ENCODE measurements at regions of chr1 and their contacts with region 1.

Region 1: DNA sequence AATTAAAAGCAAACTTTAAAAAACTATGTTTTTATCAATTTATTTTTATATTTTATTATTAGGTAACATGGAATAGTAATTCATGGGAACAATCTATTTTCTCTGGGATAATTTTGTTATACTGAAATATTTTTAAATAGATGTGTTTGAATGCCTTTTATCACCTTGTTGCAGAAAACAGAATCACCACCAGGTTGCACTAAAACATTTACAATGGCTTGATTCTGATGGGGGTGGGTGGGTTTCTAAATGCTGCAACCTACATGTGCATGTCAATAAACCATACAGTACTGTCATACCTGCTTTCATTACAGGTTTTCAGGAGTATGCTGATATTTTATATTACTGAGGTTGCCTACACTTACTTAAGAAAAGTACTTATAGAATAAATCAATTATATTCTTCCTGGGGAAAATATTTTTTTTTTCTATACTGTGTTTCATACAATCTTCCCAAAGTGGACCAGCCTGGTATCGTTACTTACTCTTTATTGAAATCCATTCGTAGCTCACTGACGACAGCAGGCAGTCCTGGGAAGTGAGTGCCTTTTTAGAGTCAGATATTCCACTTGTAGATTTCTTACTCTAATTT is 132.8 kb downstream of the PTPRC start:
- DNase-seq: peak; percentile 62
- H3K4me3 ChIP-seq: no peak overlapping the region
- H3K27ac ChIP-seq: no peak overlapping the region
- H3K4me1 ChIP-seq: peaks cover 8% of the 10 kb centered on the region
- CTCF ChIP-seq: peak; percentile 89

Region 2: DNA sequence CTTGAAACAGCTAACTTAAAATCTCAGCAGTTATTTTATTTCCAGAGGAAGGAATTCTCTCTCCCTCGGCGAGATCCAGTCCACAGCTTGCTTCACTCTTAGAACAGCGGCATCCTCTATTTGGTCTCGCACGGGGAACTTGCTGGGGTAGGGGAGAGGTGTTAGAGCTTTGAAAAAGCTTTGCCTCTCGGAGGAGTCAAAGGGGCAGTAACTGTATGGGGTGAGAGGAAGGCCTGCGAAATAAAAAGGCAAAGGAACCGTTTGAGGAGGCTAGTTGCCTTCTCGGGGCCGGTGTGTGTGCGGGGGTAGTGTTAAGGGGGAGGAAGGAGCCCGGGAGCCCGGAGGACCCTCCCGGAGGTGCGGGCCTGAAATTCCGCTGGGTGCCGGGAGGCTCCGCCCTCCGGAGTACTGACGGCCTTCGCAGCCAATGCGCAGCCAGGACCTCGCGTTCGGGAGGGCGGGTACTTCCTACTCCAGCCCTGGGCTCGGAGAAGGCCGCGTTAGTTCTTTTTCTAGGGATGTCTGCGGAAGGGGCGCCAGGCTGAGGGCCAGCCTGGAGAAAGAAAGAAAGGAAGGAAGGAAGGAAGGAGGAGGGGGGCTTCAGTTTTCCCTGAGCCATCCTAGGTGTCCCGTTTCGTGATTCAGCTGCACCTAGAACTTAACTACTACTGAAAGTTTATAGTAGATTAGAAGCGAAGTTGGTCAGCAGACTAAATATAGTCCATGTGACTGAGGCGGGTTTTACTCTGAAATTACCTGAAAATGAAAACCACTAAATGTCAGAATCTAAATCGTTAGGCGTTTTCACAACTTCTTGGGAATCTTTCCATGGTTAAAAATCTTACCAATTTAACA is 612.7 kb before region 1 on chr1:
- CTCF ChIA-PET with region 1: no interaction called
- POLR2A ChIA-PET with region 1: no interaction called
- intact Hi-C with region 1: no loop called
- DNase-seq: peak; percentile 90
- H3K4me3 ChIP-seq: peak overlapping the region; percentile 97
- H3K27ac ChIP-seq: peak overlapping the region; percentile 70
- H3K4me1 ChIP-seq: peaks cover 36% of the 10 kb centered on the region
- CTCF ChIP-seq: no peak

Region 3: GRCh38 chr1:198959032-198959431 is 187.4 kb after region 1 on chr1:
- CTCF ChIA-PET with region 1: no interaction called
- POLR2A ChIA-PET with region 1: no interaction called
- intact Hi-C with region 1: no loop called
- DNase-seq: no peak
- H3K4me3 ChIP-seq: no peak overlapping the region
- H3K27ac ChIP-seq: no peak overlapping the region
- H3K4me1 ChIP-seq: no peaks in the 10 kb centered on the region
- CTCF ChIP-seq: no peak

Region 4: GRCh38 chr1:199002661-199003060 is 231.0 kb after region 1 on chr1:
- CTCF ChIA-PET with region 1: no interaction called
- POLR2A ChIA-PET with region 1: no interaction called
- intact Hi-C with region 1: no loop called
- DNase-seq: no peak
- H3K4me3 ChIP-seq: no peak overlapping the region
- H3K27ac ChIP-seq: no peak overlapping the region
- H3K4me1 ChIP-seq: no peaks in the 10 kb centered on the region
- CTCF ChIP-seq: no peak

Region 5: DNA sequence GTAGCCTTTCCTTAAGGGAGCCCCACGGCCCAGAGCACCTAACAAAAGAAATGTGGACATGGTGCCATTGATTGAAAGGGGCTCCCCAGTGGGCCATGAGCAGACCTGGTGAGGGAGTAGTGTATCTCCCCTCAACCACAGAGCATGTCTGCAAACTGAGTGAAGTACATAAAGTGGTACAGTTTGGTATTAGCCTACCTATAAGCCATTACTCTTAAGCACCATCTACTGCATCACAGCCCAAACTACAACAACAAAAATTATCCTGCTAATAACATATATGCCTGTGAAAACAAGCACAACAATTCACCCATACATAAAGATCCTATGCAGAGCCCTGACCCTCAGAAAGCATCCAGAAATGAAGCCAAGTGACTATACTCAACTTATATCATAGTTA is 275.0 kb after region 1 on chr1:
- CTCF ChIA-PET with region 1: no interaction called
- POLR2A ChIA-PET with region 1: no interaction called
- intact Hi-C with region 1: loop called (anchors 5 kb)
- DNase-seq: peak; percentile 54
- H3K4me3 ChIP-seq: no peak overlapping the region
- H3K27ac ChIP-seq: no peak overlapping the region
- H3K4me1 ChIP-seq: peaks cover 21% of the 10 kb centered on the region
- CTCF ChIP-seq: peak; percentile 74

Region 6: GRCh38 chr1:199113265-199113869 is 341.7 kb after region 1 on chr1:
- CTCF ChIA-PET with region 1: interaction called, 5 read pairs
- POLR2A ChIA-PET with region 1: interaction called, 4 read pairs
- intact Hi-C with region 1: loop called (anchors 1 kb)
- DNase-seq: peak; percentile 80
- H3K4me3 ChIP-seq: no peak overlapping the region
- H3K27ac ChIP-seq: no peak overlapping the region
- H3K4me1 ChIP-seq: no peaks in the 10 kb centered on the region
- CTCF ChIP-seq: peak; percentile 98

Region 7: GRCh38 chr1:199243423-199244061 is 471.9 kb after region 1 on chr1:
- CTCF ChIA-PET with region 1: no interaction called
- POLR2A ChIA-PET with region 1: interaction called, 5 read pairs
- intact Hi-C with region 1: loop called (anchors 1 kb)
- DNase-seq: peak; percentile 59
- H3K4me3 ChIP-seq: no peak overlapping the region
- H3K27ac ChIP-seq: no peak overlapping the region
- H3K4me1 ChIP-seq: peaks cover 5% of the 10 kb centered on the region
- CTCF ChIP-seq: peak; percentile 80

Region 8: DNA sequence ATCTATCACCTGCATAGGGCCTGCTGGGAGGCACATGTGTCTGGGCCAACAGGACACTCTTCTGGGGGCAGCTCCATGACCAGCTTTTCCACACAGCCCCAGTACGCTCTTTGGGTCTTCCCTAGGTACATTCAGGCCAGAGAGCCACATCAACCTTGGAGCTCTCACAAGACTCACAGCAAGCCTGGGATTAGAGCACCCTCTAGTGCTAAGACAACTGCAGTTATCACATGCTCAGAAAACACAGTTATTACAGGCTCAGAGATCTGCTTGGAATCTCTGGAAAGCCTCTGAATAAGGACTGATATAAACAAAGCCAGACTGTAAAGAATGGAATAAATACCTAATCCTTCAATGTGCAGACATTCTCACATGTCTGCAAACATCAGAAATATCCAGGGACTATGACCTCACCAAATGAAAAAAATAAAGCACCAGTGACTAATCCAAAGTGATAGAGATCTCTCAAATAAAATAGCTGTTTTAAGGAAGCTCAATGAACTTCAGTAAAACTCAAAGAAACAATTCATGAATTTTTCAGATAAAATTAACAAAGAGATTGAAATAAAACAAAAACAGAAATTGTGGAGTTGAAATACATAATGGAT is 692.0 kb after region 1 on chr1:
- CTCF ChIA-PET with region 1: no interaction called
- POLR2A ChIA-PET with region 1: no interaction called
- intact Hi-C with region 1: loop called (anchors 2 kb)
- DNase-seq: peak; percentile 51
- H3K4me3 ChIP-seq: no peak overlapping the region
- H3K27ac ChIP-seq: no peak overlapping the region
- H3K4me1 ChIP-seq: no peaks in the 10 kb centered on the region
- CTCF ChIP-seq: peak; percentile 78

Measured in OCI-LY7 (cell line).